H1 (cell line): ENCODE measurements at regions of chr18 and their contacts with region 1.

Region 1: GRCh38 chr18:62529597-62529996 is 6.8 kb downstream of the ZCCHC2 start:
- DNase-seq: no peak
- H3K4me3 ChIP-seq: no peak overlapping the region
- H3K27ac ChIP-seq: no peak overlapping the region
- H3K4me1 ChIP-seq: peaks cover 0 to 11% (median 6%) of the 10 kb centered on the region in 4 experiments; a peak in 6 of 7 replicates
- H3K27me3 ChIP-seq: peaks cover 0 to 16% (median 11%) of the 10 kb centered on the region in 4 experiments; a peak in 5 of 7 replicates
- CTCF ChIP-seq: no peak
- EP300 ChIP-seq: no peak
- POLR2A ChIP-seq: no peak
- RAD21 ChIP-seq: no peak

Region 2: DNA sequence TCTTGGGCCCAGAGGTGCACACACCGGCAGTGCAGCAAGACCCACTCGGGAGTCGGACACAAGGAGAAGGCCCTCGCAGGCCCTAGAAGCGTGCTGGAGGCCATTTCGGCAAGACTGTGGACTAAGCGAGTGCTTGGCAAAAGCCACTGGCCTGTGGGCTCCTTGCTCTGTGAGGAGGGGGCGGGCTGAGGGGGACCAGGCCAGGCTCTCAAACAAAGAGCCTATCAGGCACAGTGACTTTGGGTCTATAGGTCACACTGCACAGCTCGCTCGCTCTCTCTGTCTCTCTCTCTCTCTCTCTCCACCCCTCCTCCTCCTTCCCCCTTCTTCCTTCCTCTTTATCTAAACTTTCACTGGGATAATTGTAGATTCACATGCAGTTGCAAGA is 30.3 kb before region 1 on chr18:
- CTCF ChIA-PET with region 1: no interaction called
- POLR2A ChIA-PET with region 1: no interaction called
- DNase-seq: no peak
- H3K4me3 ChIP-seq: no peak overlapping the region
- H3K27ac ChIP-seq: no peak overlapping the region
- H3K4me1 ChIP-seq: peaks cover 0 to 3% (median 0%) of the 10 kb centered on the region in 4 experiments; a peak in 1 of 7 replicates
- H3K27me3 ChIP-seq: no peaks in the 10 kb centered on the region; a peak in 1 of 7 replicates
- CTCF ChIP-seq: no peak
- EP300 ChIP-seq: no peak
- POLR2A ChIP-seq: no peak
- RAD21 ChIP-seq: no peak

Region 3: GRCh38 chr18:62566199-62566598 is 36.6 kb after region 1 on chr18:
- CTCF ChIA-PET with region 1: interaction called, 10 read pairs
- POLR2A ChIA-PET with region 1: interaction called, 5 read pairs
- DNase-seq: peak in 1 of 2 experiments; percentile 5
- H3K4me3 ChIP-seq: no peak overlapping the region
- H3K27ac ChIP-seq: no peak overlapping the region
- H3K4me1 ChIP-seq: no peaks in the 10 kb centered on the region
- H3K27me3 ChIP-seq: no peaks in the 10 kb centered on the region
- CTCF ChIP-seq: peak in 2 of 3 experiments; percentile 49 to 53; a peak in 3 of 4 replicates
- EP300 ChIP-seq: no peak
- POLR2A ChIP-seq: no peak
- RAD21 ChIP-seq: peak; percentile 44 to 58